ENCODE measurements at regions of chr10 and their contacts with region 1.

Region 1: DNA sequence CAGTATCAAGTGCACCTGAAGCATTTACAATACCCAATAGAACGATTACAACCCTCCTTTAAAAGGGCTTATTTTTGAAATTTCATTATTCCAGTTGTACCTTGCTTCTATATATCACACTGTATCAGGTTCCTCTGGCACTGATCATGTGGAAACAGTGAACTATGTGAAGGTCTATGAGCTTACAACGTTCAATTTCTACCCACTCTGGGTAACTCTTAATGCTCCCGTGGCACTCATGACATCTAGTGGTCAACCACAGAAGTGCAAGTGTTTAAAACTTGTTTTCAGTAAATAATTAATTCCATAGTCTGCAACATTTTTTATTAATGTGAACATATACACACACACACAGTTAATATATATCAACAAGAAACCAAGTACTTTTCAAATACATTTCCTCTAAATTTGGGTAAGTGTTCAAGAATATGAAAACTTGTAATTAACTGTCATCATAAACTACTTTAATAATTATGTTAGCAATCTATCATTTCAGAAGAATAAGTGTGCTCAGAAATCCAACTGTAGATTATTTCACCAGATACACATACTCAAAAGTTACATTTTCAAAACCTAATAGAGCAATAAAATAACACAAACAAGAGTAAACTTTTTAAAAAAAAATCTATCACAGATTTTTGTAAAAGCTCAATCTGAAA is 61.0 kb downstream of the MPP7 start:
- DNase-seq: peak; percentile 33
- H3K4me3 ChIP-seq: no peak overlapping the region
- H3K27ac ChIP-seq: no peak overlapping the region
- H3K27me3 ChIP-seq: peaks cover 6% of the 10 kb centered on the region
- CTCF ChIP-seq: peak; percentile 94

Region 2: DNA sequence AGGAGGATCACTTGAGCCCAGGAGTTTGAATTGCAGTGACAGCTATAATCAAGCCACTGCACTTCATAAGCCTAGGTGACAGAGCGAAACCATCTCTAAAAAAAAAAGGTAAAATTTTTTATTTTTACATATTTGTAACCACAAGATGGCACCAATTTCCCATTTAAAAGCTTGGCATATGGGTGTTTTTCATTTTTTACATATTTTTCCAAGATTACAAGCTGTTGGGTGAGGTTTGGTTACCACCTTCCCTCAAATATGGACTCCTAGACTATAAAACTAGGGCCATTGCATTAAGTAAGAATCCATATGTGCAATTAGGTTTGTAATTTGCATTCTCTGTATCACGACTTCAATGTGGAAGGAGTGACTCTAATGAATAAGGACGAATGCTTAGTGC is 872.0 kb before region 1 on chr10:
- CTCF ChIA-PET with region 1: interaction called, 11 read pairs
- POLR2A ChIA-PET with region 1: no interaction called
- DNase-seq: no peak
- H3K4me3 ChIP-seq: no peak overlapping the region
- H3K27ac ChIP-seq: no peak overlapping the region
- H3K27me3 ChIP-seq: no peaks in the 10 kb centered on the region
- CTCF ChIP-seq: peak; percentile 32

Region 3: GRCh38 chr10:27558612-27559020 is 683.3 kb before region 1 on chr10:
- CTCF ChIA-PET with region 1: interaction called, 25 read pairs
- POLR2A ChIA-PET with region 1: interaction called, 3 read pairs
- DNase-seq: peak; percentile 15
- H3K4me3 ChIP-seq: no peak overlapping the region
- H3K27ac ChIP-seq: no peak overlapping the region
- H3K27me3 ChIP-seq: no peaks in the 10 kb centered on the region
- CTCF ChIP-seq: peak; percentile 81

Region 4: GRCh38 chr10:27819781-27820531 is 421.9 kb before region 1 on chr10:
- CTCF ChIA-PET with region 1: interaction called, 11 read pairs
- POLR2A ChIA-PET with region 1: no interaction called
- DNase-seq: peak; percentile 16
- H3K4me3 ChIP-seq: no peak overlapping the region
- H3K27ac ChIP-seq: no peak overlapping the region
- H3K27me3 ChIP-seq: no peaks in the 10 kb centered on the region
- CTCF ChIP-seq: no peak

Region 5: DNA sequence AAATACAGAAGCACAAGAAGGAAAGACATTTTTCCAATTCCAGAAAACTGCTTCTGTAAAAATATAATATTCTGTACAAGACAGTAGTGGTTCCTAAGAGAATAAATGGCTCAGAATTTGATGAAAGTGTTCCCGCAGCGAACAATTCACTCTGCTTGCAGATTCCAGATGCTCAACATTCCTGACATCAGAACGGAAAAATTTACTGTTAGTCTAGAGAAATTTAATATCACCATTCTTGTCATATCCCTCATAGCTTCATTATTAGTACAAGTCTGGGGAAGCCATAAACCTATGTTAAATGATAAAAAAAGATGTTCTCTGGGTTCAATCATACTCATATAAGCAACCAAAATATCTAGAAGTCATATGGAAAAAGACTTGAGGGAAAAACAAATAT is 22.6 kb before region 1 on chr10:
- CTCF ChIA-PET with region 1: interaction called, 14 read pairs
- POLR2A ChIA-PET with region 1: no interaction called
- DNase-seq: peak; percentile 13
- H3K4me3 ChIP-seq: no peak overlapping the region
- H3K27ac ChIP-seq: no peak overlapping the region
- H3K27me3 ChIP-seq: no peaks in the 10 kb centered on the region
- CTCF ChIP-seq: no peak

Region 6: DNA sequence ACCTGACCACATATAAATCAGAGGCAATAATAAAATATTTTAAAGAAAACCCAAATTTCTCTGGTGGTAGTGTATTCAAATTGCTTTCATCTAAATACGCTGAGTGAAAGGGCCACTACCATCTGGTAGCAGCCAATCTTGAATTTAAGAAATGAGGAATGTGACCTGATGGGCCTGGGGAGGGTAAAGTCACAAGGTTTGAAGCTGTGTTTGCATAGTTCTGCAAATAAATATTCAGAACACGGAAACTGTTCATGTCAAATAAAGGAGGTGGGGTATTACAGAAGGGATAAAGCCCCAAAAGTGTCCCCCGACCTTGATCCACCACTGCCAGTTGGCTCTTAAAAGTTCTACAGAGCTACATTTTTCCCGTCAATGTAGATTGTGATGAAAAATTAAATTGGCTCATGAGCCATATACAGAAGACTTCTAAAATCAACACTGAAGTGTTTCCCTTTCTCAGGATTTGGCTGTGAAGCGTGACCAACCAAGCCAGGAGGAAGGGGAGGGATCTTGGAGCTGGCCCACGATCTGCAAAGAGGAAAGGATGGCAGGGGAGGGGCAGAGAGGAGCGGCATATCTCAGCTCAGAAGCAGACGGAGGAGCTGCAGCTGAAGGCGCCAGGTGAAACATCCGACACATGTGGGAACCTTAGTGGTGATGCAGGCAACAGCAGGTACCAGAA is 21.4 kb after region 1 on chr10:
- CTCF ChIA-PET with region 1: no interaction called
- POLR2A ChIA-PET with region 1: no interaction called
- DNase-seq: no peak
- H3K4me3 ChIP-seq: no peak overlapping the region
- H3K27ac ChIP-seq: no peak overlapping the region
- H3K27me3 ChIP-seq: peaks cover 14% of the 10 kb centered on the region
- CTCF ChIP-seq: no peak

Region 7: DNA sequence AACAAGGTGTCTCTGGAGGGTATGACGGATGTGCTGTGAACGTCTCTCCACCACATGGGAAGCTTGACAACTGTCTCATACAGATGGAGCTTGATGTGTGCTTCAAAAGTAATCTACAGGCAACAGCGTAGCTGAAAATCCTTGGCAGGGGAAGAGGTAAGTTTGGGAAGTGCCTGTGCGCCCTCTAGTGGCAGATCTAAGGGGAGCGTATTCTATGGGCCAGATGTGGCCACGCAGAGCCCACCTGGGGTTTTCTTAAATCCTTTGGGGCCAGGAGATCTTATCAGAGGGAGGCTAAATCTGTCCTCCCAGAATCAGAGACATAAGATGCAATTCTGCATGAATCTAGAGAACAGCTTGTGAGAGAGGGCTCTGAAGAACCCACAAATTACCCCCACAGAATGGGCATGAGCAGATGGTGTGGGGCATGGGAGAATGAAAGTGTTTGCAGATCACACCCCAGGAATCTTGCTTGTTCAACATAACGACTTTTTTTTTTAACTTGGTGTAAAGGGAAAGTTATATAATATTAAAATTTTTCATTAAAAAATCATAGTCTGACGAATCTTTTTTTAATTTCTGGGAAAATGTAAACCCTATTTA is 152.2 kb after region 1 on chr10:
- CTCF ChIA-PET with region 1: interaction called, 27 read pairs
- POLR2A ChIA-PET with region 1: no interaction called
- DNase-seq: peak; percentile 34
- H3K4me3 ChIP-seq: no peak overlapping the region
- H3K27ac ChIP-seq: no peak overlapping the region
- H3K27me3 ChIP-seq: peaks cover 2% of the 10 kb centered on the region
- CTCF ChIP-seq: peak; percentile 97